GM10248 (cell line): ENCODE measurements at regions of chr2 and their contacts with region 1.

Region 1: GRCh38 chr2:102005989-102006885 is 14.5 kb downstream of the IL1R2 start:
- DNase-seq: peak; percentile 55
- CTCF ChIP-seq: peak; percentile 51

Region 2: GRCh38 chr2:100601661-100602060 is 1404.6 kb before region 1 on chr2:
- CTCF ChIA-PET with region 1: no interaction called
- POLR2A ChIA-PET with region 1: interaction called, 11 read pairs
- DNase-seq: no peak
- CTCF ChIP-seq: no peak

Region 3: GRCh38 chr2:101912545-101912944 is 93.7 kb before region 1 on chr2:
- CTCF ChIA-PET with region 1: no interaction called
- POLR2A ChIA-PET with region 1: no interaction called
- DNase-seq: no peak
- CTCF ChIP-seq: no peak

Region 4: GRCh38 chr2:101993772-101994171 is 12.5 kb before region 1 on chr2:
- CTCF ChIA-PET with region 1: interaction called, 29 read pairs
- POLR2A ChIA-PET with region 1: no interaction called
- DNase-seq: no peak
- CTCF ChIP-seq: no peak

Region 5: DNA sequence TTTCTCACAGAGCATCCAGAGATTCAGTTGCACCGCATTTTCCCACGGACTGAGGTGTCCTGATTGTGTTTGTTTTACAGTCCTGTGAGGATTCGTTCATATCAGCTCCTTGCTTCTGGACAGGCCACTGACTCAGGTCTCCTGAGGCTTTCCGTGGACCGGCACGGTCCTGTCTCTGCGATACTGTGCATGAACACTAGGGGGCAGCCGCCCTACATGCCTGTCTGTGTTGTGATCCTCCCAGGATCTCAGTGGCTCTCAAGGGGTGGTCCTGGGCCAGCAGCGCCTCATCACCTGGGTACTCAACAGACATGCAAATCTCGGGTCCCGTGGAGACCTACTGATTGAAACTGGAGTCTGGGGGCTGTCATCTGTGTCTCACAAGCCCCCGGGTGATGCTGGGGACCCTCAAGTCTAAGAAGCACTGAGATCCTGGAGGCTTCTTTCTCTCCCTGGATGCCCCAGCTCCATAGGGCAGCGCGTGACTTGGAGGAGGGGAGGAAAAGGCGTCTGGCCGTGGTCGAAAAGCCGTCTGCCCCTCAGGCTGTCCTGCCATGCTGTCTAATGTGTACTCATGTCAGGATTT is 14.5 kb after region 1 on chr2:
- CTCF ChIA-PET with region 1: interaction called, 26 read pairs
- POLR2A ChIA-PET with region 1: no interaction called
- DNase-seq: peak; percentile 72
- CTCF ChIP-seq: peak; percentile 99